ENCODE measurements at regions of chr17 and their contacts with region 1.

Region 1: DNA sequence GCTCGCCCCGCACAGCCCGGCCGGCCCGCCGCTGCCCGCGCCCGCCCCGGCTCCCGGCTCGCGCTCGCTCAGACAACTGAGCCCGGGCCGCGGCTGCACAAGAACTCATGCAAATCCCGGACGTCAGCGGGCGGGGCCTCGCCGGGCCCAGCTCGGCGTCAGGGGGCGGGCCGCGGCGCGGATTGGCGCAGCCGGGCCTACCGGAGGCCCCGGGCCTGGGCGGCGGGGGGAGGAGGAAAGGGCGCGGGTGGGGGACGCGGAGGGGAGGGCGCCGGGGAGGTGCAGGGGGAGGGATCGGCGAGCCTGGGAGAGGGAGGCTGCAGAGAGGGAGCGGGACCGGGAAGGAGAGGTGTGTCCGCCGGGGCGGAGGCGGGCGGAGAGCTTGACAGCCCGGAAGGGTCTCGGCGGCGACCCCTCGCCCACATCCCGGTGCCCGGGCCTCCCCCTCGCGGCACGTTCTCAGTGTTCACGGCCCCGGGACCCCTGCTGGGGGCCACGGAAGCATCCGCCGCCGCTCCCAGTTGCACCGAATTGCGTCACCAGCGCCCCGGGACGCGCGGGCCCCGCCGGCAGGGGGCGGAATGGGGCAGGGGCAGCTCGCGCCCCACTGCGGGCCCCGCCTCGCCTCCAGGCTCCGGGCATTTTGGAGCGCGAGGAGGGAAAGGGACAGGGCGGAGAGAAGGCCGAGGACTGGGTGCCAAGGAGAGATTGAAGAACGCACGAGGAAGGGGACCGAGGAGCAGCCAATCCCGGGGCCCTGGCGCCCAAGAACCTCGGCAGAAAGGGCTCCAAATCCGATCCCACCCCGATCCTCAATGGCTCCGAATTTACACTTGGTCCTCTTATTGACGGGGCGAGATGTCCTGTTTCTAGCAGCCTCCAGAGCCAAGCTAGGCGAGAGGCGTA is at the start of gene CBX4:
- DNase-seq: peak; percentile 98
- total RNA-seq, gene CBX4: 23.8 TPM

Region 2: GRCh38 chr17:79777894-79778503 is 61.6 kb before region 1 on chr17 and contains the start of gene CBX2:
- intact Hi-C with region 1: loop called (anchors 5 kb)
- DNase-seq: peak; percentile 91
- total RNA-seq, gene CBX2: 3.5 TPM

Region 3: DNA sequence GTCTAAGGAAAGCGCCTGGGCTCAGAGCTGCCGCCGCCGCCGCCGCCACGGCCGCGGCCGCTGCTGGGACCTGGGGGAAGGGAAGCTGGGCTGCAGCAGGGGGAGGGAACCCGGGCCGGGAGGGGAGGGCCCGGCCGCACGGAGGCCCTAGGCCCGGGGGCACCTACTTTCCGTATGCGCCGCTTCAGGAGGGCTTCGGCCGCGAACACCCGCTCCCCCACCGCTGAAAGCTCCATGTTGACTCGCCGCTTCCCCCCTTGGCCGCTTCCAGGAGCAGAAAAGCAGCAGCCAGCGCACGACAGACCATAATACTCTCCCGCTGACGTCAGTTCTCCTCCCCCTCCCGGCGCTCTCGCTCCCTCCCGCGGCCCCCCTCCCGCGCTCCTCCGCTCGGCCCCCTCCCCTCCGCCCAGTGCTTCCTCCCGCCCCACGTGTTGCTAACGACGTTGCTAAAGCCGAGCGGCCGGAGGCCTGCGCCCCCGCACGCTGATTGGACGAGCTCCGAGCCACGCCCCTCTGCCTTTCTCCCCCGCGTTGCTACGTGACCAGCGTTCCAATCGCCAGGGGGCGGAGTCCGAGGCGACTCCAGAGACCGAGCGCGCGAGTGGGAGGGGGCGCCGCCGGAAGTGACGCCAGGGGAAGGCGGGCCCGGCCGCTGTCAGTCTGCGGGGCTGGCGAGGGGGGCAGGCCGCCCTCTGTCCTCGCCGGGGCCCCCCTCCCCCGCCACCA is 42.7 kb before region 1 on chr17 and contains the start of gene CBX8:
- intact Hi-C with region 1: loop called (anchors 2 kb)
- DNase-seq: peak; percentile 100
- total RNA-seq, gene CBX8: 5.7 TPM

Region 4: DNA sequence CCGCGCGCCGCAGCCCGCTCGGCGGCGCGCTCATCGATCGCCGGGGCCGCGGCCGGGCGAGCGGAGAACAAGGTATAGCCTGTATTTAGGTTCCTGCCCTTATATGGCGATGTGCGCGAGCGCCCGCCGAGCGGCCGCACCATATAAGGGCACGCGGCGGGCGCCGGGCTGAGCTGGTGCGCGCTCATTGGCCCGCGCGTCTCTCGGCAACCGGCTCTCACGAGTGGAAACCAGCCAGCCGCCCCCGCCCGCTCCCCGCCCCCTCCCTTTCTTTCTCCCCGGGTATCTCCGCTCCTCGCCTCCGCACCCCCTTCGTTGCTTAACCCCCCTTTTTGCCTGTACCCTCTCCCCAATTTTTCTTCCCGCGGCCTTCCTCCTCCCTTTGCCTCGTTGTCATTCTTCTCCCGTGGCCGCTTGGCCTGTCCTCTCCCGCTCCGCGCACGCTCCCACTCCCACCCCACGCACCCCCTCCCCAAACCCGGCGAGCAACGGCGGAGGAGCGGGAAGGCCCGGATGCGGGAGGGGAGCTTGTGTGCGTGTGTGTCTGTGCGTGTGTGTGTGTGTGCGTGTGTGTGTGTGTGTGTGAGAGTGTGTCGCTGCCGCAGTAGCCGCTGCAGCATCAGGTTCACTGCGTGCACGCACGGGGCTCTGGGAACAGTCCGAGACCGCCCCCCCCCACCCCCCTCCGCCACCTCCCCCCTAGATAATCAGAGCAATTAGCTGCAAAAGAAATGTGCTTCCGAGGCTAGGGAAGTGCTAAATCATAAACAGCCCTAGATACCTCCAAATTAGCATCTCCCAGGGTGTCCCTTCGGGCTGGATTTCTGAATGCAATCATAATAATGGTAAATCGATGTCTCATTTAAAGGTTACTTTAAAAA is 29.2 kb before region 1 on chr17:
- intact Hi-C with region 1: loop called (anchors 2 kb)
- DNase-seq: peak; percentile 89

Region 5: GRCh38 chr17:79915850-79916430 is 76.3 kb after region 1 on chr17:
- intact Hi-C with region 1: no loop called
- DNase-seq: no peak

Region 6: GRCh38 chr17:79970576-79971068 is 131.0 kb after region 1 on chr17:
- intact Hi-C with region 1: no loop called
- DNase-seq: peak; percentile 67